HEK293 (cell line): ENCODE measurements at regions of chr3 and their contacts with region 1.

Region 1: GRCh38 chr3:129249276-129250065 is at the start of gene COPG1:
- H3K4me3 ChIP-seq: peak within 1 kb of the TSS; percentile 95
- H3K27ac ChIP-seq: peak within 1 kb of the TSS; percentile 38; the same call in 1 of the 2 replicates
- H3K4me1 ChIP-seq: no peaks in the 10 kb centered on the region
- CTCF ChIP-seq: no peak

Region 2: GRCh38 chr3:128969993-128970739 is 279.3 kb before region 1 on chr3:
- CTCF ChIA-PET with region 1: interaction called, 109 read pairs
- POLR2A ChIA-PET with region 1: interaction called, 3 read pairs
- H3K4me3 ChIP-seq: no peak overlapping the region
- H3K27ac ChIP-seq: no peak overlapping the region
- H3K4me1 ChIP-seq: no peaks in the 10 kb centered on the region
- CTCF ChIP-seq: peak; percentile 24; the same call in 1 of the 2 replicates

Region 3: DNA sequence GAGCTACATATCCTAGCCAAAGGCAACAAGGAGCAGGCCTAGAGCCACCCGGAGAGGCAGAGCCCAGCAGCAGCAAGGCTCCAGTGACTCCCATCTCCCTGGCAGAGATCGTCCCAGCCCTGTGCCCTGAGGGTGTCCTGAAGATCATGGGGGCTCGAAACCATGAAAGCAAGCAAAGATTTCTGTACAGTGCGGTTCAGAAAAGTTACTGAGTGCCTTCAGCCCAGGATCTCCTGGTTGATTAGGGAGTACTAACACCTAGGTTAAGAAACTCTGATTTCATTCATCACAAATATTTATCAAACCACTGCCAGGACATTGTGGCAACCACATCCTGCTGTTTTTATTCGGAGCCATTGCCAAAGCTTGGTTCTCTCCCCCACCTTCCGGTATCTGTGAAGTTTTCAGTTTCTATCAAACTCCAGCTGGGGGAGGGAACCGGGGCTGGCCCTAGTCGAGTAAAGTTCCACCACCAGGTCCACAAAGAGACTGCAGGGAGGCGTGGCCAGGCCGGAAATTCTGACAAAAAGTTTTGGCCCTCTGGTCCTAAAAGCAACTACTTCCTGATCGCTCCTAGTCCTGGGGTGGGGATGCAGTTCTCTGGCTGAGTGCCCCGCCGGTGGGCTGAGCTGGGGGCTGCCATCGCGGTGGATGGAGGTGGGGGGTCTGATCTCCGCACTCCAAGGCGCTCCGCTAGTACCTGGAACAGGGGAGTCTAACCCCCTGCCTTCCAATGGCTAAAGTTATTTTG is 129.0 kb before region 1 on chr3:
- CTCF ChIA-PET with region 1: interaction called, 8 read pairs
- POLR2A ChIA-PET with region 1: interaction called, 13 read pairs
- H3K4me3 ChIP-seq: peak overlapping the region; percentile 68
- H3K27ac ChIP-seq: peak overlapping the region; percentile 46; the same call in 1 of the 2 replicates
- H3K4me1 ChIP-seq: peaks cover 15% of the 10 kb centered on the region
- CTCF ChIP-seq: no peak

Region 4: GRCh38 chr3:129183569-129184395 is 65.7 kb before region 1 on chr3 and contains the start of gene CNBP:
- CTCF ChIA-PET with region 1: interaction called, 18 read pairs
- POLR2A ChIA-PET with region 1: interaction called, 4 read pairs
- H3K4me3 ChIP-seq: peak within 1 kb of the TSS; percentile 99
- H3K27ac ChIP-seq: peak within 1 kb of the TSS; percentile 90
- H3K4me1 ChIP-seq: peaks cover 7% of the 10 kb centered on the region; the same call in 1 of the 2 replicates
- CTCF ChIP-seq: no peak; the same call in 1 of the 2 replicates

Region 5: GRCh38 chr3:129233538-129233937 is 15.9 kb before region 1 on chr3:
- CTCF ChIA-PET with region 1: interaction called, 10 read pairs
- POLR2A ChIA-PET with region 1: interaction called, 3 read pairs
- H3K4me3 ChIP-seq: no peak overlapping the region
- H3K27ac ChIP-seq: no peak overlapping the region
- H3K4me1 ChIP-seq: no peaks in the 10 kb centered on the region
- CTCF ChIP-seq: no peak

Region 6: GRCh38 chr3:129266651-129267050 is 17.2 kb after region 1 on chr3:
- CTCF ChIA-PET with region 1: no interaction called
- POLR2A ChIA-PET with region 1: no interaction called
- H3K4me3 ChIP-seq: no peak overlapping the region
- H3K27ac ChIP-seq: no peak overlapping the region
- H3K4me1 ChIP-seq: no peaks in the 10 kb centered on the region
- CTCF ChIP-seq: no peak

Region 7: DNA sequence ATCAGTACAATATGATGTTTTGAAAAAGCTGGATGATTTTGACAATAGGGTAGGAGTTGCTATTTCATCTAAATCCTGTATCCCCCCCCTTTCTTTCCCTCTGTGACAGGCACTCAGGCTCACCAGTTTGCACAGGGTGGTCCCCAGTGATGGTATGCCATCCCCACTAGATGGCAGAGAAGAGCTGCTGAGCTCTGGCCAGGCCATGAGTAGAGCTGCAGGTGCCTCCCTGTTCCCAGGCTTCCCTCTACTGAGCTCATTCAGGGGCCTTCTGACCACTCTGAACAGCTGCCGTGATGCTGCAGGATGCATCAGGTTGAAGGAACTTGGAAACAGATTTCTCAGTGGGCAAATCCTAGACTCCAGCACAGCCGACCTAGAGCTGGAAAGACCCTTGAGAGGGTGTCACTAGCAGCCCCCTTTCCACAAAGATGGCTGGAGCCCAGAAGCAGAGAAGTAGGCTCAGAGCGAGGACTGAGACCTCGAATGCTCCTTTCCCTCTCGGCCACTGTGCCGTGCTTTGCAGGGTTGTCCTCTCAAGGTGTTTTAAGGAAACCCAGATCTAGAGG is 133.9 kb after region 1 on chr3:
- CTCF ChIA-PET with region 1: no interaction called
- POLR2A ChIA-PET with region 1: no interaction called
- H3K4me3 ChIP-seq: no peak overlapping the region
- H3K27ac ChIP-seq: no peak overlapping the region
- H3K4me1 ChIP-seq: no peaks in the 10 kb centered on the region
- CTCF ChIP-seq: peak; percentile 66